Endothelial cell of umbilical vein (primary cell): ENCODE measurements at regions of chr7 and their contacts with region 1.

Region 1: DNA sequence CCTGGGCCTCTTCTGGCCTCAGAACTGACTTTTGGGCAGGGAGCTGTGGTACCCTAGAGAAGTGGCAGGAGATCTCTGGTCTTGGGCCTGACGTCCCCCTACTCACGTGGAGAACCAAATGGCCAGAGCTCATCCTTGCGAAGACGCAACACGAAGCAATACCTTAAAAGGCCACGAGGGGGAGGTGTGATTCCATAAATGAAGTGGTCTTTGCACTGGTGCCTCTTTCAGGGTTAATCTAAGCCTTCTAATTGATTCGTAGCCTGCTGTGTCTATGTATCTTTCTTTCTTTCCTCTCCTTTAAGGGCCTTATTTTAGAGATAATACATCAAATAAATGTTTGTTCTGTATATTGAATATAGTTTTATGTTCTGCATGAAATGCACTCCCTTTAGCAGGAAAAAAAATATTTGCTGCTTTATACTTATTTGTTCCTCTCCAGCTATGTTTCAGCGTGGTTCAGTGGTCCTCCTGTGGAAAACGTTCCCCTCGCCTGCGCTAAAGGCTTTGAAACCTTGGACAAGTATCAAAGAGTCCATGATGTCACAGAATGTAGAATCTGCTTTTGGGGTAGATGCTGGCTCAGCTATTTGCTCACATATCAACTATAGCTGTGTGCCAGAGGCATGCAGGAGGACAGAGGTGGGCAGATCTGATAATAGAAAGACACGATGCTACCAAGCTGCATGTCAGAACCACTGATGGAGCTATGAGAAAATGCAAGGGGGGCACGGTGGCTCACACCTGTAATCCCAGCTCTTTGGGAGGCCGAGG is 41.0 kb downstream of the STRA8 start:
- DNase-seq: peak; percentile 81
- H3K4me3 ChIP-seq: no peak overlapping the region
- H3K27ac ChIP-seq: no peak overlapping the region
- H3K4me1 ChIP-seq: no peaks in the 10 kb centered on the region
- H3K27me3 ChIP-seq: peaks cover 0 to 2% of the 10 kb centered on the region in 2 experiments
- CTCF ChIP-seq: peak; percentile 69 to 73
- POLR2A ChIP-seq: no peak

Region 2: DNA sequence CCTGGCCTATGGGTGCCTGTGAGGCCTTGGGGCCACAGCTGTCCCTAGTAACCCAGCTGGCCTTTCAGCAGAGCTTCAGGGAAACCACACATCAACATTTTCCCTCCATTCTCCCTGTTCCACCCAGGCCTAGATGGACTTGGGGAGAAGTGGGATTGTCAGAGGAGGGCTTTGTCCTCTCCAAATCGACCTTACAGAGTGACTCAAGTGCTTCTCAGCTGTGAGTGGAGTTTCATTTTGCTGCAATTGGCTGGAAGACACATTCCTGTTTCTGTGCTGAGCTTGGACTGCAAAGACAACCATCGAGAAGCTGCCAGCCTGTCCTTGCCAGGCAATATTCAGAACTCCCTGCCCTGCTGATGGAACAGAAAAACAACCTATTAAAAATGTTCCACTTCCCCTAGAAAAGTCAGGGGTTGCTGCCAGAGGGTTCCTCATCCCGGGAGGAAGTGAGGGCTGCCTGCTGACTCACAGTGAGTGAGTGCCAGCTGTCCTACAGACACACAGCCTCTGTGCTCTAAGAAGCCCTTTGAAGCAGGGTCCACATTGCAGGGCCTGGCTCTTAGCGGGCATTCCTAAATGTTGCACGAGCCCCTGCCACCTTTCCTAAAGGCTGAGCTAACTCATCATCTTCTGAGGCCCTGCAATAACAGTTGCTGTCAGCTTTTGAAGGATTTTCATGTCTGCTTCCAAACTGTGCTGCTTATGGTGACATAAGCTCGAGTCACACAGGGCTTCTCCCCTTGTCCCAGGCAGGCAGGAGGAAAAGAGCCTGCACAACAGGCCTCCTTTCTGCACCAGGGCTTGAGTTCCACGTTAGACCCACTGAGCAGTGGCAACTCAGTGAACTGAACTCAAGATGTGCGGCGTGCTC is 20.5 kb before region 1 on chr7:
- CTCF ChIA-PET with region 1: interaction called, 31 read pairs
- POLR2A ChIA-PET with region 1: no interaction called
- dilution Hi-C with region 1: no loop called
- intact Hi-C with region 1: no loop called
- DNase-seq: peak; percentile 89
- H3K4me3 ChIP-seq: no peak overlapping the region
- H3K27ac ChIP-seq: peak overlapping the region; percentile 66
- H3K4me1 ChIP-seq: peaks cover 18% of the 10 kb centered on the region
- H3K27me3 ChIP-seq: no peaks in the 10 kb centered on the region
- CTCF ChIP-seq: no peak
- POLR2A ChIP-seq: no peak

Region 3: DNA sequence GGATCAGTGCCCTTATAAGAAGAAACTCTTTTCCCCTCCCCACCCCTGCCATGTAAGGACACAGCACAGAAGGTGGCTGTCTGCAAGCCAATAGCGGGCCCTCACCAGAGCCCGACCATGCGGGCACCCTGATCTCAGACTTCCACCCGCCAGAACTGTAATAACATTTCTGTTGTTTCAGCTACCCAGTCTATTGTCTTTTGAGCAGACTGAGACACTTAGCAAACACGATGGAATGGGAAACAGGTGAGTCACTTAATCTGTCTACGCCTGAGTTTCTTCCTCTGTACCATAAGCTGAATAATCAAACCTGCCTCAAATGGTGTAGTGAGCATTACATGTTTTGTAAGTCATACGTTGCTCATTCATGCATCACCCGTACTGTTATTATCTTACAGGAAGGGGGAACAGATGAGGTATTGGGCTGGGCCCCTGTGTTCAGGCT is 17.1 kb after region 1 on chr7:
- CTCF ChIA-PET with region 1: interaction called, 11 read pairs
- POLR2A ChIA-PET with region 1: no interaction called
- dilution Hi-C with region 1: no loop called
- intact Hi-C with region 1: no loop called
- DNase-seq: peak; percentile 97
- H3K4me3 ChIP-seq: no peak overlapping the region
- H3K27ac ChIP-seq: peak overlapping the region; percentile 100
- H3K4me1 ChIP-seq: peaks cover 22% of the 10 kb centered on the region
- H3K27me3 ChIP-seq: no peaks in the 10 kb centered on the region
- CTCF ChIP-seq: no peak
- POLR2A ChIP-seq: peak; percentile 73

Region 4: DNA sequence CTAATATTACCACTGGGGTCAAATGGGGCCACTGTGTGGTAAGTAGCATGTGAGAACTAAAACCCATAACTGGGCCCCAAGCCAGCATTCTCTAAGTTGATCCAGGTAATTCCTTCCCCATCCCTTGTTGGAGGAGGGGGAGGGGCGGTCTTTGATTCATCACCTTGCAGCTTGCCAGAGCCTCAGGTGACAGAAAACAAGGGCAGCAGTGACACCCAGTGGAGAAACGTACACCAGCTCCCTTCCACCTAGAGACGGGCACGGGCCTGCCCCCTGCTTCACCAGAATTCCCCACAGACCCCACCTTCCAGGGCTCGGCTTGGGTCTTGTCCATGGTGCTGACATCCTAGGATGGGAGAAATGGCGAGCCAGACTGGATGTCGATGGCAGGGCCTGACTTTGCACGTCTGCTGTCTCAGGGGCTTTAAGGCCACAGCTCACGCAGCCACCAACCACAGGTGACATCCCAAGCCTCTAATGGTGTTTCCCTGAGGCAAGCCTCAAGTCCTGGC is 61.0 kb after region 1 on chr7:
- CTCF ChIA-PET with region 1: interaction called, 127 read pairs
- POLR2A ChIA-PET with region 1: no interaction called
- dilution Hi-C with region 1: no loop called
- intact Hi-C with region 1: no loop called
- DNase-seq: peak; percentile 73
- H3K4me3 ChIP-seq: no peak overlapping the region
- H3K27ac ChIP-seq: no peak overlapping the region
- H3K4me1 ChIP-seq: peaks cover 6% of the 10 kb centered on the region
- H3K27me3 ChIP-seq: no peaks in the 10 kb centered on the region
- CTCF ChIP-seq: peak; percentile 39 to 40
- POLR2A ChIP-seq: no peak

Region 5: DNA sequence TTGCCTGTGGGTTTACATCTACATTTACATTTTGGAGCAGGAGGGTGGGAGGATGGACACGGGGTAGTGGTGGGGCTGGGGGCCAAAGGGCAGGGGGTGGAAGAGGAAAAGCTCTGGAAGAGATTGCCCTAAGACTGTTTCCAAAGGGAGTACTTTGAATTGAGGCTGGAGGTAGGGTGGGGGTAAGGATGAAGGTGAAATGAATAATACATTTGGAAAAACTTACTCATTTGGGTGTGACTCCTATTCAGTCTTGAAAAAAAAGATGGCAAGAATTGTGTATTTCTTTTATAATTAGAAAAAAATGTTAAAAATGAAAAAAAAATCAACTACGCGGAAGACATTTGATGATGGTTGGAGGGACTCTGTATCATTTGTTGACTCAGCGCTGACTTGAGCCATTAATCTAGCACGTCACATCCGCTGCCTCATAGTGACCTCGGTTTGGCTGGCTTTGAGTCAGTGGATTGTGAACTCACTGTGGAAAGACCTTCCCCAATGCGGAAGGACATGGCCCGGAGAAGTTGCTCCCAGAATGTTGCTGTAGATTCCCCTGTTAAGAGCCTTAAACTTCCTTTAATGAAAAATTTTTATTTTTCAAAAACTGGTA is 471.1 kb after region 1 on chr7:
- CTCF ChIA-PET with region 1: no interaction called
- POLR2A ChIA-PET with region 1: no interaction called
- dilution Hi-C with region 1: no loop called
- intact Hi-C with region 1: no loop called
- DNase-seq: peak; percentile 87
- H3K4me3 ChIP-seq: no peak overlapping the region
- H3K27ac ChIP-seq: peak overlapping the region; percentile 60
- H3K4me1 ChIP-seq: peaks cover 11% of the 10 kb centered on the region
- H3K27me3 ChIP-seq: no peaks in the 10 kb centered on the region
- CTCF ChIP-seq: no peak
- POLR2A ChIP-seq: peak; percentile 54

Region 6: DNA sequence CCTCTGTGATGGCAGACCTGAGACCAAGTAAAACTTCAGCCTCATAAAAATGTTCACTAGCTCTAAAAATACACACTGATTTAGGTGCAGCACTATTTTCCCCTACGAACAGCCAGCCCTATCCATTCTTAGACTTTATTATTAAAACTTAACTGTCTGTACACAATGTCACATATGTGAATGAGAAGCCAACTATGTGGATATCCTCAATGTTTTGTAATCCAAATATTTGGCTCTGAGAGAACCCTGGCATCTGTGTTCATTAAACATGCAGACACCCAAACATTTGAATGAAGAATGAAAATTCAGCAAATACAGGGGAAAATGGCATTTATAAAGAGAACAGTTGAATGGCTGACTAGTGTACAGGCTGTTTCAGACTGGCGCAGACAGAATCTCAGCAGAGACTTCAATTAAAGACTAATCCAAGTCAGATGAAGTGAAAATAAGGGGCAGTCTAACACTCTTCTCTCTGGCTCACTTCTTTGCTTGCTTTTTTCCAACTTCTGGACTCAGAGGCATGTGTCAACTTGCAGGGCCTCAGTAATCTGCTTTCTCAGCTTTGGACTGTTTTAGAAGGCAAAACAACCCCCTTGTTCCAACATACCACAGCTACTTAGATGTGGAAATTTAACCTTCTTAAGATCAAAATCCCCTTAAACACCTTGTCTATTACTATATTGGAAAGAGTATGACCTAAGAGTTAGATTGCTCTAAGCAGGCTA is 521.3 kb after region 1 on chr7:
- CTCF ChIA-PET with region 1: interaction called, 12 read pairs
- POLR2A ChIA-PET with region 1: no interaction called
- dilution Hi-C with region 1: no loop called
- intact Hi-C with region 1: loop called (anchors 2 kb)
- DNase-seq: no peak
- H3K4me3 ChIP-seq: no peak overlapping the region
- H3K27ac ChIP-seq: no peak overlapping the region
- H3K4me1 ChIP-seq: no peaks in the 10 kb centered on the region
- H3K27me3 ChIP-seq: peaks cover 0 to 3% of the 10 kb centered on the region in 2 experiments
- CTCF ChIP-seq: no peak
- POLR2A ChIP-seq: no peak